Heart right ventricle (tissue), 16 donors: ENCODE measurements at regions of chr2 and their contacts with region 1.

Region 1: DNA sequence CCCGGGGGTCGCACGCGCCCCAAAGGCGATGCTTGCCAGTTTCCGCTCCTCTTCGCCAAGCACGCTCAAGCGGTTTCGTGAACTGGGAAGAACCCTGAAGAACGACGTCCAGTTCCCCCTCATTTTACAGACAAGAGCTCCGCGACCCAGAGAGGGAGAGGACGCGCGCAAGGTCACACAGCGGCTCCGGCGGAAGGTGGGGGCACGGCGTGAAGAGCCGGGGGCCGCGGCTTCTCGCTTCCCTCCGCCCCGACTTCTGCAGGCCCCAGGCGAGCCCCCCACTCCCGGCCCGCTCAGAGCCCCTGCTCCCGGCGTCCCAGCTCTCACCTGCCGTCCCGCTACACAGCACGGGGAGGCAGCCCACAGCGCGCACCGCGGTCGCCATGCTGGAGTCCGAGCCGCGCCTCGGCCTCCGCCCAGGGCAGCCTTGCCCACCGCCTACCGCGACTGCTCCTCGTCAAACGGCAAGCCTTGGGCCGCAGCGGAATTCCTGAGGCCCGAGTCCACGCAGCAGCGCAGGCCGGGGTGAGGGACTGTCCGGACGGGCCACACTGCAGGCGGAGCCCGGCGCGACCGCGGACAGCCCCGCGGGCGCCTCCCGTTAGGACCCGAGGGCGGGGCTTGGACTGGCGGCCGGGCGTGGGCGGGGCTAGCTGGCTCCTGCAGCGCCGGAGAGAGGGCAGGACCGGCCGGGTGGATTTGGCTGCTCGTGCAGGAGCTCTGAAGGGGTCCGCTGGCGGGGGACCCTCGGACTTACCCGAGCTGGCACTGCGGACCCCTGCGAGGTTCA is at the start of gene MRPS5:
- DNase-seq: peak; percentile 88 to 92
- ATAC-seq: peak; percentile 95 to 98 (median 98)
- H3K4me3 ChIP-seq: peak within 1 kb of the TSS; percentile 76 to 99 (median 88)
- H3K27ac ChIP-seq: peak within 1 kb of the TSS; percentile 93 to 99 (median 97)
- H3K4me1 ChIP-seq: peaks cover 9 to 41% (median 36%) of the 10 kb centered on the region in 9 donors
- H3K27me3 ChIP-seq: no peaks in the 10 kb centered on the region
- CTCF ChIP-seq: peak in 3 of 9 donors; percentile 28 to 44 (median 41)
- total RNA-seq, gene MRPS5: 50.6 to 85.7 (median 61.5) TPM

Region 2: DNA sequence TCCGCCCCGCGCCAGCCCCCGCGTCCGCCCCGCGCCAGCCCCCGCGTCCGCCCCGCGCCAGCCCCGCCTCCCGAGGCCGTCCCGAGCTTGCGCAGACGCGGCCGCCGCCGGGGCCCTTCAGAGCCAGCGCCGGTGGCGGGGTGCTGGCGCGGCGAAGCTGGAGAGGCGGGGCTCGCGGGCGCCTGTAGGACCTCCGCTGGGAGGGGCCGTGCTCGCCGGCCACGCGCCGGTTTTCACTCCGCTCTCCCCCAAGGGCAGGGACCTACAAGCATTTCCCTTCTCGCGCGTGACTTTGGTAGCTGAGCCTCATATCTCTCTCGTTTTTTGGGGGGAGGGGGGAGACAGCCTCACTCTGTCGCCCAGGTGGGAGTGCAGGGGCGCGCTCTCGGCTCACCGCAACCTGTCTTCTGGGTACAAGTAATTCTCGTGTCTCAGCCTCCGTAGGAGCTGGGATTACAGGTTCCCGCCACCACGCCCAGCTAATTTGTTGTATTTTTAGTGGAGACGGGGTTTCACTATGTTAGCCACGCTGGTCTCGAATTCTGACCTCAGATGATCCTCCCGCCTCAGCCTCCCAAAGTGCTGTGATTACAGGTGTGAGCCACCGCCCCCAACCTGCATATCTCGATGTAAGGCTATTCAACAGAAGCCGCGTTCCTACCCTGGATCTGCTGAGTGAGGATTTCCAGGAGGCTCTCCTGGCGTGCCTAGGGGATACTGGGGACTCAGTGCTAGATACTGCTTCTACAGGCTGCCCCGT is 38.3 kb after region 1 on chr2 and contains the start of gene ZNF514:
- intact Hi-C with region 1: loop called in 6 of 10 experiments (anchors 5 kb)
- DNase-seq: peak; percentile 64 to 84
- ATAC-seq: peak; percentile 87 to 94 (median 90)
- H3K4me3 ChIP-seq: peak within 1 kb of the TSS; percentile 40 to 90 (median 73)
- H3K27ac ChIP-seq: peak within 1 kb of the TSS; percentile 8 to 91 (median 82)
- H3K4me1 ChIP-seq: peaks cover 0 to 33% (median 26%) of the 10 kb centered on the region in 9 donors
- H3K27me3 ChIP-seq: no peaks in the 10 kb centered on the region
- CTCF ChIP-seq: no peak
- total RNA-seq, gene ZNF514: 9.9 to 17.2 (median 12.4) TPM

Region 3: GRCh38 chr2:95179451-95179850 is 57.8 kb after region 1 on chr2:
- intact Hi-C with region 1: no loop called
- DNase-seq: peak; percentile 33 to 55
- ATAC-seq: peak; percentile 55 to 91 (median 80)
- H3K4me3 ChIP-seq: no peak overlapping the region
- H3K27ac ChIP-seq: peak overlapping the region in 7 of 10 donors; percentile 1 to 82 (median 69)
- H3K4me1 ChIP-seq: peaks cover 0 to 13% (median 4%) of the 10 kb centered on the region in 9 donors
- H3K27me3 ChIP-seq: no peaks in the 10 kb centered on the region
- CTCF ChIP-seq: no peak

Region 4: DNA sequence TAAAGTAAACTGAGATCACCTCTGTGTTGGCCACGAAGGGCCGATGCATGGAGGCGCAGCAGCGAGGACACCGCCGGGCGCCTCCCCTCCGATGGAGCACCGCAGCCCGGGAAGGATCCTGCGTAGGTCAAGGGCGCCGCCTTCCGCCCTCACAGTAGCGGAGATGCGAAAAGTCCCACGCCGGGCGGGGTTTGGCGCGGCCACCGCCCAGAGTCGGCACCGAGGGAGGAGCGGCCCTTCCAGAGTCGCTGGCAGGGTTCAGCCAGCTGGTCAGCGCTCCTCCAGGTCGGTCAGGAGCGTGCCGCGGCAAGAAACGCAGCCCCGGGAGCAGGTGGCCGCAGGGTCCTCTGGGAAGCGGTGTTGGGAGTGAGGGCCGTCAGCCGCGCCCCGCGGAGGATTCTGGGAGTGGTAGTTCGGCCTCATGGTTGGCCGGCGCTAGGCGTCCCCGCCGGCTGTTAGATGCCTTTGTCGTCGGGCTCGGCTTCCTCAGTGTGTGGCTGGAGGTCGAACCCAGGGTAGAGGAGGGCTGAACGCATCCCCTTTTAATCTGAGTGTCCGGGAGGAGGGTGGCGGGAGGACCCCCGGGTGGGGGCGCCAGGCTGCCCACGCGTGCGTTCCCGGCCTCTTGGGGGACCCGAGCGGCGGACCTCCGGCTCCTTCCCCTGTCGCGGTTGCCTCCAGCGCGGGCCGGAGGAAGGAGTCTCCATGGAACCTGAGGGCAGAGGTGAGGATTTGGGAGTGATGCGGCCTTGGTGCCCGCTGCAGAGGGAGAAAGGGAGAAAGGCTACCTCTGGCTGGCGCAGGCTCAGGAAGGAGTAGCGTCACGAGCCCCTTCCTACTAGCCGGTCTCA is 85.7 kb after region 1 on chr2 and contains the start of gene ZNF892:
- intact Hi-C with region 1: loop called in 3 of 10 experiments (anchors 5 to 10 kb)
- DNase-seq: peak; percentile 92
- ATAC-seq: peak; percentile 98 to 99 (median 99)
- H3K4me3 ChIP-seq: peak within 1 kb of the TSS; percentile 71 to 86 (median 80)
- H3K27ac ChIP-seq: peak within 1 kb of the TSS; percentile 52 to 95 (median 90)
- H3K4me1 ChIP-seq: peaks cover 3 to 22% (median 16%) of the 10 kb centered on the region in 9 donors
- H3K27me3 ChIP-seq: no peaks in the 10 kb centered on the region
- CTCF ChIP-seq: peak in 8 of 9 donors; percentile 23 to 76 (median 56)
- total RNA-seq, gene ZNF892: 1.9 to 4.4 (median 3.0) TPM

Region 5: GRCh38 chr2:95231723-95232122 is 110.1 kb after region 1 on chr2:
- intact Hi-C with region 1: no loop called
- DNase-seq: peak in 1 of 2 donors; percentile 18
- ATAC-seq: peak in 1 of 8 donors; percentile 22
- H3K4me3 ChIP-seq: no peak overlapping the region
- H3K27ac ChIP-seq: no peak overlapping the region
- H3K4me1 ChIP-seq: no peaks in the 10 kb centered on the region
- H3K27me3 ChIP-seq: no peaks in the 10 kb centered on the region
- CTCF ChIP-seq: peak; percentile 26 to 65 (median 60)

Region 6: DNA sequence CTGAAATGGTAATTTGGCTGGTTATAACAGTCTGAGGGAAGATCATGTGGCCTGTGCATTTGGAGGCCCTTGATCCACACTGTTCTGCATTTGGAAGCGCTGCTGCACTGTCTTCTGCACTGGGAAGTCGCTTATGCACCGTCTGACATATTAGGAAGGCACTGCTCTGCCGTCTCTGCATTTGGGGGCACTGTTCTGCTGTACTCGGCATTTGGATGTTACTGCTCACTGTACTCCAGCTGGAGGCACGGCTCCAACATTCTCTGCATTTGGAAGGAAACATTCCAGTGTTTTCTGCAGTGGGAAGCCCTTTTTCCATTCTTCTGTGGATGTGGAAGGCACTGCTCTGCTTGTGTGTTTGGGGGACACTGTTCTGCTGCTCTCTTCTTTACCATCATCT is 143.0 kb after region 1 on chr2:
- intact Hi-C with region 1: no loop called
- DNase-seq: no peak
- ATAC-seq: no peak
- H3K4me3 ChIP-seq: no peak overlapping the region
- H3K27ac ChIP-seq: no peak overlapping the region
- H3K4me1 ChIP-seq: no peaks in the 10 kb centered on the region
- H3K27me3 ChIP-seq: no peaks in the 10 kb centered on the region
- CTCF ChIP-seq: no peak